ENCODE measurements at regions of chr17 and their contacts with region 1.

Region 1: GRCh38 chr17:30124273-30124796 is 7.7 kb downstream of the NSRP1 start:
- DNase-seq: no peak
- H3K27ac ChIP-seq: no peak overlapping the region
- CTCF ChIP-seq: no peak

Region 2: DNA sequence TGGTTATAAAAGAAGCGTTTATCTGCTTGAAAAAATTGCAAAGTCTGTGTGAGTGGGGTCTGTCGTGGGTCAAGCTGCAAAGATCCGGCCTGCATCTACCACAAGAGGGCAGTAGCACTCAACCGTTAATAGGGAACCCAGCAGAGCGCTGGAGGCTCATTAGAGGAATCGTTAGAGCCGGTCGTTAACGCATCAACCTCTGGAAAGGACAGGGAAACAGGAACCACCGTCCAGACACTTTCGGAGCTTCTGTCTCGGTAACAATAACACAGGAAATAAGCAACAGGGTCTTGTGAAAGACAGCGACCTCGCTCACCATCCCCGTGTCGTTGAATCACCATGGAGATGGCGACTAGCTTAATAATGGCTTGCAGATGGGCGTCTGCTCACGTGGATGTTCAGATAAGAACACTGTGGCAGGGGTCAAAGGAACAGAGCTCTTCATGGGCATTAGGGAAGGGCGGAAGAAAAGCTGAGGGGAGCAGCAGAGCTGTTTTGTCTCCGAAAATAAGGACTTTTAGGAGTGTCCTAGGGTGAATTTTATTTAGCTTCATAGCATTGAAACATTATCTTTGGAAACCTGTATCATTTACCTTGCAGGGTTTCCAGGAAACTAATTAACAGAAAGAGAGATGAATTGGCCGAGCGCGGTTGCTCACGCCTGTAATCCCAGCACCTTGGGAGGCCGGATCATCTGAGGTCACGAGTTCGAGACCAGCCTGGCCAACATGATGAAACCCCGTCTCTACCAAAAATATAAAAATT is 19.6 kb before region 1 on chr17:
- CTCF ChIA-PET with region 1: interaction called, 12 read pairs
- POLR2A ChIA-PET with region 1: no interaction called
- DNase-seq: peak; percentile 73
- H3K27ac ChIP-seq: no peak overlapping the region
- CTCF ChIP-seq: peak; percentile 91

Region 3: GRCh38 chr17:30134551-30134950 is 10.2 kb after region 1 on chr17:
- CTCF ChIA-PET with region 1: interaction called, 10 read pairs
- POLR2A ChIA-PET with region 1: no interaction called
- DNase-seq: no peak
- H3K27ac ChIP-seq: no peak overlapping the region
- CTCF ChIP-seq: no peak

Region 4: GRCh38 chr17:30236766-30237165 is 112.4 kb after region 1 on chr17:
- CTCF ChIA-PET with region 1: interaction called, 13 read pairs
- POLR2A ChIA-PET with region 1: no interaction called
- DNase-seq: peak; percentile 55
- H3K27ac ChIP-seq: no peak overlapping the region
- CTCF ChIP-seq: peak; percentile 42

Region 5: DNA sequence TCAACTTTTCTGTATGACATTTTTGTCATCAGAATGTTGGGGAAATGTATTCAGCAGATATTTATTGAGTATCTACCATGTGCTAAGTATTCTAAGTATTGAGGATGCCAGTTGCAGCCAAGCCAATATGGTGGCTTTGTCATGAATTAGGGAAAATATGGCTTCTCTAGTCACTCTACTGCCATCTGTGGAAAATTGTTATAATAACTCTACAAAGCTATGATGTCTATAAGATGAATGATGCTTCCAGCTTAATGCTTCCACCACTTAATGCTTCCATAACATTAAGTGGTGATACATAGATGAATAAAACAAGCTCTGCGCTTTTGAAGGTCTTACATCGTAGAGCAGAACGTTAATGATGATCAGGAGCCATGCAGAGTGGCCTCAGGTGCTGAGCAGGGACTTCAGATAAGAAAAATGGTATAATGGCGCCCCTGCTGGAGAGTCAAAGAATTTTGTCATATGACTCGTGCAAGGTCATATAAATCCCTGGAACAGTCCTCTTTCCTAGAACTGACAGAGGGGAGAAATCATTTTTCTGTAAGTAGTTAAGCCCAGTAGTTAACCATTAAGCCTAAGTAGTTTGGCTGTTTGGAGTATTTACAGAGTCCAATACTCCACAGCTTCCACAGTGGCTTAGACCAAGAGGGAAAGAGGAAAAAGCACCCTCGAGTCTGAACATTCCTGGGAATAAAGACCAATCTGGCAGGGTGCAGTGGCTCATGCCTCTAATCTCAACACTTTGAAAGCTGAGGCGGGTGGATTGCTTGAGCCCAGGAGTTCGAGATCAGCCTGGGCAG is 212.2 kb after region 1 on chr17:
- CTCF ChIA-PET with region 1: interaction called, 13 read pairs
- POLR2A ChIA-PET with region 1: no interaction called
- DNase-seq: peak; percentile 30
- H3K27ac ChIP-seq: no peak overlapping the region
- CTCF ChIP-seq: peak; percentile 59; the same call in 1 of the 2 replicates